H1 (cell line): ENCODE measurements at regions of chr10 and their contacts with region 1.

Region 1: GRCh38 chr10:103859161-103860086 is 4.0 kb upstream of the SH3PXD2A start:
- DNase-seq: peak; percentile 46 to 84
- H3K4me3 ChIP-seq: no peak overlapping the region
- H3K27ac ChIP-seq: no peak overlapping the region
- H3K4me1 ChIP-seq: peaks cover 0 to 6% (median 3%) of the 10 kb centered on the region in 4 experiments; a peak in 5 of 7 replicates
- H3K27me3 ChIP-seq: peaks cover 0 to 21% (median 15%) of the 10 kb centered on the region in 4 experiments; a peak in 5 of 7 replicates
- CTCF ChIP-seq: peak; percentile 39 to 77 (median 77)
- EP300 ChIP-seq: no peak
- POLR2A ChIP-seq: no peak
- RAD21 ChIP-seq: peak; percentile 73 to 84

Region 2: GRCh38 chr10:103481974-103482531 is 377.4 kb before region 1 on chr10:
- CTCF ChIA-PET with region 1: no interaction called
- POLR2A ChIA-PET with region 1: no interaction called
- DNase-seq: no peak
- H3K4me3 ChIP-seq: no peak overlapping the region
- H3K27ac ChIP-seq: no peak overlapping the region
- H3K4me1 ChIP-seq: peaks cover 0 to 2% (median under 1%) of the 10 kb centered on the region in 4 experiments; a peak in 2 of 7 replicates
- H3K27me3 ChIP-seq: no peaks in the 10 kb centered on the region
- CTCF ChIP-seq: peak; percentile 26 to 63 (median 46); a peak in 3 of 4 replicates
- EP300 ChIP-seq: no peak
- POLR2A ChIP-seq: no peak
- RAD21 ChIP-seq: peak in 1 of 2 experiments; percentile 45; a peak in 2 of 4 replicates

Region 3: GRCh38 chr10:103727546-103727963 is 131.9 kb before region 1 on chr10:
- CTCF ChIA-PET with region 1: interaction called, 11 read pairs
- POLR2A ChIA-PET with region 1: interaction called, 3 read pairs
- DNase-seq: no peak
- H3K4me3 ChIP-seq: no peak overlapping the region
- H3K27ac ChIP-seq: no peak overlapping the region
- H3K4me1 ChIP-seq: peaks cover 0 to 14% (median 7%) of the 10 kb centered on the region in 4 experiments; a peak in 6 of 7 replicates
- H3K27me3 ChIP-seq: no peaks in the 10 kb centered on the region
- CTCF ChIP-seq: no peak
- EP300 ChIP-seq: no peak
- POLR2A ChIP-seq: no peak
- RAD21 ChIP-seq: no peak

Region 4: GRCh38 chr10:103752680-103753248 is 106.7 kb before region 1 on chr10:
- CTCF ChIA-PET with region 1: interaction called, 15 read pairs
- POLR2A ChIA-PET with region 1: interaction called, 4 read pairs
- DNase-seq: peak in 1 of 2 experiments; percentile 76
- H3K4me3 ChIP-seq: no peak overlapping the region
- H3K27ac ChIP-seq: no peak overlapping the region
- H3K4me1 ChIP-seq: peaks cover 4 to 11% (median 7%) of the 10 kb centered on the region in 4 experiments
- H3K27me3 ChIP-seq: no peaks in the 10 kb centered on the region
- CTCF ChIP-seq: peak in 2 of 3 experiments; percentile 46 to 73; a peak in 2 of 4 replicates
- EP300 ChIP-seq: no peak
- POLR2A ChIP-seq: no peak
- RAD21 ChIP-seq: peak; percentile 23 to 43; a peak in 2 of 4 replicates

Region 5: DNA sequence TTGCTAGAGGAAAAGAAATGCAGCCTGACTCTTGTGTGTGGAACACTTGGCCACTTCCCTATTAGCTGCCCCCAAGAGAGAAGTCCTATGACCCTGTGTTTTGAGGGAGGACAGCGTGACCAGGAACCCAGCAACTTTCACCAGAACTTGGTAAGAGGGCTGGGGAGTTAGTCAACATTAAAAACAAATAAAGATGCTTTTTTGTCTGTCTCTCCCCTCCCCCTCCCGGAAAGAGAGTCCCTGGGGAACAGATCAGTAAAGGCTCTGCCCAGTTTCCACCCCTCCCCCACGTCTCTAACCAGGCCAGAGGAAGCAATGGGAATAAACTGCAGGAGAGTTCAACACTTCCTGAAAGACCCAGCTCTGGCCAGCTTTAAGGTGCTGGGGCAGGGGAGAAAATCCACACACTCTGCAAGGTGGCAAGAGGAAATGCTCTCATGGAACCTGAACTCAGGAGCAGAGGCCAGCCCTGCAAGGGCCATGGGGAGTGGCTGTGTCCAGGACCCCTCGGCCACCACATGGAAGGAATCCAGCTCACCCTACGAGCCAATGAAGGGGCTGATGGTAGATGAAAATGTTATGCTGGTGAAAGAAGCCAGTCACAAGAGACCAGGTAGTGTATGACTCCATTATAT is 25.6 kb before region 1 on chr10:
- CTCF ChIA-PET with region 1: interaction called, 12 read pairs
- POLR2A ChIA-PET with region 1: interaction called, 8 read pairs
- DNase-seq: no peak
- H3K4me3 ChIP-seq: peak overlapping the region in 1 of 4 experiments; percentile 18; a peak in 1 of 8 replicates
- H3K27ac ChIP-seq: peak overlapping the region; percentile 56; the same call in 1 of the 2 replicates
- H3K4me1 ChIP-seq: peaks cover 12 to 21% (median 18%) of the 10 kb centered on the region in 4 experiments
- H3K27me3 ChIP-seq: no peaks in the 10 kb centered on the region
- CTCF ChIP-seq: no peak
- EP300 ChIP-seq: no peak
- POLR2A ChIP-seq: no peak
- RAD21 ChIP-seq: no peak

Region 6: GRCh38 chr10:103888113-103888841 is 28.9 kb after region 1 on chr10:
- CTCF ChIA-PET with region 1: interaction called, 48 read pairs
- POLR2A ChIA-PET with region 1: no interaction called
- DNase-seq: no peak
- H3K4me3 ChIP-seq: no peak overlapping the region
- H3K27ac ChIP-seq: no peak overlapping the region
- H3K4me1 ChIP-seq: peaks cover 0 to 2% (median 0%) of the 10 kb centered on the region in 4 experiments; a peak in 1 of 7 replicates
- H3K27me3 ChIP-seq: no peaks in the 10 kb centered on the region
- CTCF ChIP-seq: peak in 2 of 3 experiments; percentile 49 to 85; a peak in 2 of 4 replicates
- EP300 ChIP-seq: no peak
- POLR2A ChIP-seq: no peak
- RAD21 ChIP-seq: peak; percentile 88 to 89

Region 7: GRCh38 chr10:103918053-103918846 is 58.8 kb after region 1 on chr10 and contains the start of gene STN1:
- CTCF ChIA-PET with region 1: no interaction called
- POLR2A ChIA-PET with region 1: no interaction called
- DNase-seq: peak; percentile 95 to 96
- H3K4me3 ChIP-seq: peak within 1 kb of the TSS; percentile 74 to 91 (median 81)
- H3K27ac ChIP-seq: peak within 1 kb of the TSS; percentile 22; the same call in 1 of the 2 replicates
- H3K4me1 ChIP-seq: peaks cover 7 to 19% (median 11%) of the 10 kb centered on the region in 4 experiments
- H3K27me3 ChIP-seq: no peaks in the 10 kb centered on the region
- CTCF ChIP-seq: peak; percentile 41 to 52 (median 42)
- EP300 ChIP-seq: peak; percentile 61 to 99; a peak in 2 of 3 replicates
- POLR2A ChIP-seq: peak in 1 of 2 experiments; percentile 91; a peak in 1 of 3 replicates
- RAD21 ChIP-seq: peak in 1 of 2 experiments; percentile 30; a peak in 1 of 4 replicates
- total RNA-seq, gene STN1: 10.3 and 12.4 TPM in 2 replicates

Region 8: GRCh38 chr10:103933557-103934121 is 74.2 kb after region 1 on chr10:
- CTCF ChIA-PET with region 1: no interaction called
- POLR2A ChIA-PET with region 1: no interaction called
- DNase-seq: no peak
- H3K4me3 ChIP-seq: no peak overlapping the region
- H3K27ac ChIP-seq: no peak overlapping the region
- H3K4me1 ChIP-seq: peaks cover 0 to 5% (median 3%) of the 10 kb centered on the region in 4 experiments; a peak in 4 of 7 replicates
- H3K27me3 ChIP-seq: no peaks in the 10 kb centered on the region
- CTCF ChIP-seq: no peak
- EP300 ChIP-seq: no peak
- POLR2A ChIP-seq: no peak
- RAD21 ChIP-seq: no peak